CD8-positive, alpha-beta memory T cell (primary cell): ENCODE measurements at regions of chr2 and their contacts with region 1.

Region 1: DNA sequence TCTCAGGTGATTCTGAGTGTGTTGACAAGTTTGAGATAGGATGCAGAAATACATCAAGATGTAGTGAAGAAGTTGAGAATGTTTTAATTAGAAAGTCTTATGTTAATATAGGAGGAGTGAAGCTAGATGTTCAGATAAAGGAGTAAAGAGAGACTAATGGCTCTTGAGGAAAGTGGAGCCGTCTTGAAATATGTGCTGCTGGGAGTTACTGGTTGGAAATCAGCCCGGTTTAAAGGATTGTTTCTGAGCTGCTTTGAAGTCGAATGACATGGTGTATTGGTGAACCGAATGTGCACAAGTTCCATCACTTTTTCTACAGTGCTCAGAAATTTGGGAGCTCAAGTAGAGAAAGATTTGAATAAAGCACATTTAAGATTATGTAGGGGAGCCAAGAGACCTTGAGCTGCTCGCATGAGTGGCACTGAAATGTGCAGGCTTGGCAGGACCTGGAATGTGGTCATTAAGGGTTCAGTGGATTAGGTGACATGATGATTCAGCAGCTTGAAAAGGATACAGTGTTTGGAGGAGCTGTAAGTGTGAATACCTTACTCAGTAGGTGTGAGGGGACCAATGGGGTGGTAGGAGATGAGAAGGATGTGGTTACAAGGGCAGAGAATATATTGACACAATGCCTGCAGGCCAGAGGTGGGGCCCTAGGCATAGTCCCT is 68.6 kb downstream of the CAB39 start:
- DNase-seq: peak; percentile 21 to 81 (median 33)
- H3K4me3 ChIP-seq: no peak overlapping the region
- H3K4me3 Mint-ChIP-seq: peak overlapping the region; percentile 6 to 78 (median 37)
- H3K27ac ChIP-seq: no peak overlapping the region
- H3K27ac Mint-ChIP-seq: peak overlapping the region; percentile 37 to 90 (median 72)
- H3K4me1 ChIP-seq: peaks cover 65% of the 10 kb centered on the region
- H3K4me1 Mint-ChIP-seq: peaks cover 70 to 88% (median 83%) of the 10 kb centered on the region in 3 donors
- H3K27me3 ChIP-seq: no peaks in the 10 kb centered on the region
- H3K27me3 Mint-ChIP-seq: no peaks in the 10 kb centered on the region

Region 2: DNA sequence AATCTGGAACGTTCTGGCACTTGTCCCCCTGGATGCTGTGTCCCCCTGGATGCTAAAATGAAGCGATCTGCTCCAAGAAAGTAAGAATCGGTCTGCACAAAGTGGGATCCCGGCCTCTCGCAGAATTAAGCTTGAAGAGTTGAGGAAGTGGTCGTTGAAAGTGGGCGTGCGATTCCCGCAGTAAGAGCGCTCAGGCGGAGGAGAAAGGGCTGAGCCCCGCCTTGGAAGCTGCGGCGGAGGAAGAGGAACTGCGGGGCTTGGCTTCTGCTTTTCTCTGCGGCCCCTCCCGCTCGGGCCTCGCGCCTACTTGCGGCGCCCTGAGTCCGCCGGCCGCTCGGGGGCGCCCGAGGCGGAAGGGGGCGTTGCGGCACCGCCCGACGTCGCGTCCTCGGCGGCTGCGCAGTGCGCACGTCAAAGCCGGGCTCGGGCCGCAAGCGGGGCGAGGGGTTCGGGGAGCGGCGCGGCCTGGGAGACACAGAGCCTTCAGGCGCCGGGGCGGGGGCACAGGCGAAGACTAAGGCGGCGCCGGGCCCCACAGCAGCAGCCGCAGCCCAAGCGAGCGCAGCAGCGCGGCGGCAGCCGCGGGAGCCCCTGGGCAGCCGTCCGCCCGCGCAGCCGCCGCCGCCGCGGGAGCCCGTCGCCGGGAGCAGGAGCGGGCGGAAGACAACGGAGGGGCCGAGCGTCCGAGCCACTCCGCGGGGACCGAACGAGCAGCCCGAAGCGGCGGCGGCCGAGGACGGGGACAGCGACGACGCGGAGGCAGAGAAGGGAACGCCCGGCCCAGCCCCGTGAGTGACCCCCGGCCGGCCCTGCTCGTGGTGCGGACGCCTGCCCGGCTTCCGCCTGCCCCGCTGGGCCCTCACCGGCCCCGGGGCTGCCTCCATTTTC is 68.6 kb before region 1 on chr2 and contains the start of gene CAB39:
- CTCF ChIA-PET with region 1: interaction called, 12 read pairs
- POLR2A ChIA-PET with region 1: interaction called, 11 read pairs
- DNase-seq: peak; percentile 84 to 91 (median 88)
- H3K4me3 ChIP-seq: peak within 1 kb of the TSS; percentile 96
- H3K4me3 Mint-ChIP-seq: peak within 1 kb of the TSS; percentile 92 to 100 (median 94)
- H3K27ac ChIP-seq: peak within 1 kb of the TSS; percentile 71
- H3K27ac Mint-ChIP-seq: peak within 1 kb of the TSS; percentile 86 to 100 (median 97)
- H3K4me1 ChIP-seq: peaks cover 37% of the 10 kb centered on the region
- H3K4me1 Mint-ChIP-seq: peaks cover 34 to 46% (median 42%) of the 10 kb centered on the region in 3 donors
- H3K27me3 ChIP-seq: no peaks in the 10 kb centered on the region
- H3K27me3 Mint-ChIP-seq: peaks cover 0 to 2% of the 10 kb centered on the region in 2 donors
- total RNA-seq, gene CAB39: 136 to 147 TPM

Region 3: GRCh38 chr2:230793572-230794359 is 12.5 kb after region 1 on chr2:
- CTCF ChIA-PET with region 1: interaction called, 56 read pairs
- POLR2A ChIA-PET with region 1: interaction called, 17 read pairs
- DNase-seq: peak; percentile 51 to 85 (median 57)
- H3K4me3 ChIP-seq: peak overlapping the region; percentile 24
- H3K4me3 Mint-ChIP-seq: peak overlapping the region; percentile 11 to 80 (median 71)
- H3K27ac ChIP-seq: peak overlapping the region; percentile 51
- H3K27ac Mint-ChIP-seq: peak overlapping the region in 7 of 8 donors; percentile 78 to 98 (median 92)
- H3K4me1 ChIP-seq: peaks cover 61% of the 10 kb centered on the region
- H3K4me1 Mint-ChIP-seq: peaks cover 54 to 64% (median 64%) of the 10 kb centered on the region in 3 donors
- H3K27me3 ChIP-seq: no peaks in the 10 kb centered on the region
- H3K27me3 Mint-ChIP-seq: no peaks in the 10 kb centered on the region

Region 4: GRCh38 chr2:230798769-230799399 is 17.6 kb after region 1 on chr2:
- CTCF ChIA-PET with region 1: interaction called, 56 read pairs
- POLR2A ChIA-PET with region 1: interaction called, 17 read pairs
- DNase-seq: peak in 3 of 5 donors; percentile 55 to 58 (median 56)
- H3K4me3 ChIP-seq: no peak overlapping the region
- H3K4me3 Mint-ChIP-seq: no peak overlapping the region
- H3K27ac ChIP-seq: no peak overlapping the region
- H3K27ac Mint-ChIP-seq: peak overlapping the region in 6 of 8 donors; percentile 31 to 87 (median 59)
- H3K4me1 ChIP-seq: peaks cover 54% of the 10 kb centered on the region
- H3K4me1 Mint-ChIP-seq: peaks cover 22 to 28% (median 23%) of the 10 kb centered on the region in 3 donors
- H3K27me3 ChIP-seq: no peaks in the 10 kb centered on the region
- H3K27me3 Mint-ChIP-seq: no peaks in the 10 kb centered on the region